ENCODE measurements at regions of chrX and their contacts with region 1.

Region 1: GRCh38 chrX:70508296-70508911 is 63.8 kb downstream of the DLG3 start:
- DNase-seq: no peak
- ATAC-seq: peak; percentile 68
- H3K4me3 ChIP-seq: no peak overlapping the region
- H3K27ac ChIP-seq: no peak overlapping the region
- H3K4me1 ChIP-seq: 0 out of 2 replicates have a peak, but pooled peaks cover 3% of the 10 kb centered on the region
- H3K27me3 ChIP-seq: no peaks in the 10 kb centered on the region
- CTCF ChIP-seq: no peak
- EP300 ChIP-seq: no peak
- POLR2A ChIP-seq: no peak
- RAD21 ChIP-seq: no peak

Region 2: GRCh38 chrX:70025464-70025863 is 482.9 kb before region 1 on chrX:
- CTCF ChIA-PET with region 1: no interaction called
- POLR2A ChIA-PET with region 1: no interaction called
- RAD21 ChIA-PET with region 1: no interaction called
- SMC1A ChIA-PET with region 1: no interaction called
- in situ Hi-C with region 1: no loop called
- intact Hi-C with region 1: no loop called
- DNase-seq: no peak
- ATAC-seq: no peak
- H3K4me3 ChIP-seq: no peak overlapping the region
- H3K27ac ChIP-seq: no peak overlapping the region
- H3K4me1 ChIP-seq: no peaks in the 10 kb centered on the region
- H3K27me3 ChIP-seq: no peaks in the 10 kb centered on the region
- CTCF ChIP-seq: no peak
- EP300 ChIP-seq: no peak
- POLR2A ChIP-seq: no peak
- RAD21 ChIP-seq: no peak

Region 3: DNA sequence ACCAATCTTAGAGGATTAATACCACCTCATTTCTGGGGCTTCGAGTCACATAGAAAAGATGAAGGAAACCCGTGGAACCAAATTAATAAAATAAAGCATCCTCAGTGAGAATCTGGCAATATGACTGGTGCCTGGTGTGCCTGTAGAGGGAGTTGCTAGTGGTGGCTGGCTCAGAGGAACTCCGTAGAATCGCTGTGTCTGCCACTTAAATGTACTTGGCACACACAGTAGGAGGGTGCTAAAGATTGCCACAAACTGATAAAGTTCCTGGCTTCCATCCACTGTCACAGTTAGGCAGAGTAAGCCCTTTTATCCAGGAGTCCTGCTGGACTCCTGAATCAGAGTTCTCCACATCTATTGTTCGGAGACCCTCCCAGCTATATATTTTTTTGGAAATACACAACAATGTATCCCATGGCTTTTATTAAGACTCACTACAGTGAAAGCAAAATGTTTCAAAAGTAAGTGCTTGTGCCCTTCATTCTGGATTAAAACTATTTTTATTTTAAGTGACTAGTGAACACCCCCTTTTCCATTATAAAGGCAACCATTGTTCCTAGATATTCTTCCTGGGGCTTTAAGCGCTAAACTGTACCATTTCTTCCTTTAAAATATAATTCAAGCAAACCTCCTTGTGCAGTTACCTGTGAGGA is 161.9 kb before region 1 on chrX:
- CTCF ChIA-PET with region 1: no interaction called
- POLR2A ChIA-PET with region 1: no interaction called
- RAD21 ChIA-PET with region 1: no interaction called
- SMC1A ChIA-PET with region 1: no interaction called
- in situ Hi-C with region 1: no loop called
- intact Hi-C with region 1: no loop called
- DNase-seq: no peak
- ATAC-seq: no peak
- H3K4me3 ChIP-seq: no peak overlapping the region
- H3K27ac ChIP-seq: no peak overlapping the region
- H3K4me1 ChIP-seq: no peaks in the 10 kb centered on the region
- H3K27me3 ChIP-seq: no peaks in the 10 kb centered on the region
- CTCF ChIP-seq: no peak
- EP300 ChIP-seq: no peak
- POLR2A ChIP-seq: no peak
- RAD21 ChIP-seq: no peak

Region 4: GRCh38 chrX:70444326-70444945 is 64.0 kb before region 1 on chrX and contains the start of gene DLG3:
- CTCF ChIA-PET with region 1: no interaction called
- POLR2A ChIA-PET with region 1: no interaction called
- RAD21 ChIA-PET with region 1: no interaction called
- SMC1A ChIA-PET with region 1: no interaction called
- in situ Hi-C with region 1: no loop called
- intact Hi-C with region 1: loop called (anchors 10 kb)
- DNase-seq: no peak
- ATAC-seq: peak; percentile 38; the same call in 2 of the 3 replicates
- H3K4me3 ChIP-seq: no peak within 1 kb of the TSS
- H3K27ac ChIP-seq: no peak within 1 kb of the TSS
- H3K4me1 ChIP-seq: no peaks in the 10 kb centered on the region
- H3K27me3 ChIP-seq: peaks cover 0 to 3% of the 10 kb centered on the region in 2 experiments; a peak in 3 of 4 replicates
- CTCF ChIP-seq: no peak
- EP300 ChIP-seq: no peak
- POLR2A ChIP-seq: no peak
- RAD21 ChIP-seq: no peak
- polyA plus RNA-seq, gene DLG3: 1.3 to 2.4 TPM

Measured in GM12878 (cell line).